Right lobe of liver (tissue), 6 donors: ENCODE measurements at regions of chr14 and their contacts with region 1.

Region 1: DNA sequence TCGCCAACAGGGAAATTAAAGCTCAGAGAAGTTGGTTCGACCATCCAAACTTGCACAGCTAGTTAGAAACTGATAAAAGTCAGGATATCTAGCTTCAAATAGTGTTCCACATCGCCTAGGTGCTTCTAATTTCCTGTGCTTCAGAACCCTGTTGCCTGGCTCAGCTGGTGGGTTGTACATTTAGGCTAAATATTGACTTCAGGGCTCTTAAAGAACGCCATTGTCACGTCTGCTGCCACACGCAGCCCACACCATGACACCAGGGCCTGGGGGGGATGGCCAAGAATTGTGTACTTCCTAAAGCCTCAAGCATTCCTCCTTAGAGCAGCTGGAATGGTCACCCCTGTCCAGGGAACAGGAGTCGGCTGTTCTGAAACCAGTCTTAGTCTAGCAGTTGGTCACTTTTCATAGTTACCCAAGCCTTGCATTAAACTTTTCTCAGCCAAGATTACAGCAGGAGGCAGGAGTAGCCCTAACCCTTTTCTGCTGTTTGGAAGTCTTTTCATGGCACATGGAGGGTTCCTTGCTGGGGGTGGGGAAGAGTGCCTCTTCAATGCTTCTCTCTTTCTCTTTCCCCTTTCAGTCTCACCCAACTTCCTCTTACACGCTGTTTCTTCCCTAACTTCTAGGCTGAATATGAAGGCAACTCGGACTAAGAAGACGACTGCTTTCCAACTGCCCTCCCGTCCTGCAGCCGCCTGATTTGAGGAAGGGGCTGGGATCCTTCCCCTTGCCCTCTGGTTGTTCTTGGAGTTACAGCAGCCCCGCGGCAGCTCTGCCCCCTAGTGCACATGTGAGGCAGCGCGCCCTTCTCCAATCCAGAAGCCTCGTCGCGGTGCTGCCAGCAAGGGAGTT is 17.1 kb downstream of the FOS start:
- DNase-seq: peak; percentile 82 to 88 (median 86)
- ATAC-seq: peak; percentile 51 to 60 (median 56)
- H3K4me3 ChIP-seq: peak overlapping the region; percentile 58 to 60 (median 58)
- H3K27ac ChIP-seq: peak overlapping the region; percentile 88 to 99 (median 90)
- H3K4me1 ChIP-seq: peaks cover 0 to 26% (median 6%) of the 10 kb centered on the region in 4 donors
- H3K27me3 ChIP-seq: no peaks in the 10 kb centered on the region
- CTCF ChIP-seq: peak; percentile 94 to 98 (median 97)
- POLR2A ChIP-seq: peak; percentile 28

Region 2: GRCh38 chr14:75132382-75133086 is 163.2 kb before region 1 on chr14:
- intact Hi-C with region 1: loop called (anchors 5 to 10 kb)
- DNase-seq: no peak
- ATAC-seq: peak; percentile 87 to 96 (median 90)
- H3K4me3 ChIP-seq: no peak overlapping the region
- H3K27ac ChIP-seq: peak overlapping the region in 1 of 3 donors; percentile 16
- H3K4me1 ChIP-seq: peaks cover 0 to 10% (median 0%) of the 10 kb centered on the region in 4 donors
- H3K27me3 ChIP-seq: no peaks in the 10 kb centered on the region
- CTCF ChIP-seq: peak; percentile 67 to 93 (median 70)
- POLR2A ChIP-seq: no peak

Region 3: DNA sequence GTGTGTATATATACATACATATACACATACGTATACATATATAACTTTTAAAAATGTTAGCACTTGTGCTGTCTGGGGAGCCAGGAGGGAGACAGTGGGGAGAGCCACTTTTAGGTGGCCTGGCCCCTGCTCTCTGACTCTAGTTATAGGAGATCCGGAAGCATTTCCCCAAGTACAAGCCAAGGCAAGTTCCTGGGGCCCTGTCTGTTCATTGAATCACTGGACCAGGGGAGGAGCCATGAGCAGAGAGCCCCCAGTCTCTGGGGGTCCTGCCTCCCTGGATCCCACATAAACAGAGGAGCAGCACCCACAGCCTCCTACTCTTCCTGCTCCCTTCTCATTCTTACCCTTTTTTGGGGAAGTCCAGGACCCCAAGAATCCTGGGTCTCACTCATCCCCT is 73.9 kb before region 1 on chr14:
- intact Hi-C with region 1: no loop called
- DNase-seq: no peak
- ATAC-seq: no peak
- H3K4me3 ChIP-seq: no peak overlapping the region
- H3K27ac ChIP-seq: no peak overlapping the region
- H3K4me1 ChIP-seq: peaks cover 0 to 4% (median 2%) of the 10 kb centered on the region in 4 donors
- H3K27me3 ChIP-seq: no peaks in the 10 kb centered on the region
- CTCF ChIP-seq: no peak
- POLR2A ChIP-seq: no peak

Region 4: GRCh38 chr14:75340921-75341320 is 45.2 kb after region 1 on chr14:
- intact Hi-C with region 1: no loop called
- DNase-seq: peak; percentile 66 to 83 (median 79)
- ATAC-seq: peak; percentile 81 to 88 (median 84)
- H3K4me3 ChIP-seq: no peak overlapping the region
- H3K27ac ChIP-seq: peak overlapping the region; percentile 51 to 78 (median 67)
- H3K4me1 ChIP-seq: no peaks in the 10 kb centered on the region
- H3K27me3 ChIP-seq: no peaks in the 10 kb centered on the region
- CTCF ChIP-seq: no peak
- POLR2A ChIP-seq: peak; percentile 74